ENCODE measurements at regions of chrX and their contacts with region 1.

Region 1: DNA sequence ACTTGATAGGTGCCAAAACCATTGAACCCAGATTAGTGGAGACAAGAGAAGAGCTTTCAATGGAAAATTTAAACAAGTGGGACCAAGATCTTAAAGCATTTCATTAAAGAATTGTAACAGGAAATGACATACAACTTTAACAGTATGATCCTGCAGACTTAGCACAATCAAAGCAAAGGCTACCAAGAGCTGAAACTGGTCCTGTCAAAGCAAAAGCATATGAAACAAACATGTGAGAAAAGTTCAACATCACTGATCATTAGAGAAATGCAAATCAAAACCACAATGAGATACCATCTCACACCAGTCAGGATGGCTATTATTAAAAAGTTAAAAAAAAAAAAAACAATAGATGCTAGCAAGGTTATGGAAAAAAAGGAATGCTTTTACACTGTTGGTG is 425.6 kb downstream of the IL1RAPL1 start:
- DNase-seq: no peak
- H3K4me3 ChIP-seq: no peak overlapping the region
- H3K27ac ChIP-seq: no peak overlapping the region
- H3K4me1 ChIP-seq: no peaks in the 10 kb centered on the region
- H3K27me3 ChIP-seq: no peaks in the 10 kb centered on the region
- CTCF ChIP-seq: no peak
- POLR2A ChIP-seq: no peak

Region 2: DNA sequence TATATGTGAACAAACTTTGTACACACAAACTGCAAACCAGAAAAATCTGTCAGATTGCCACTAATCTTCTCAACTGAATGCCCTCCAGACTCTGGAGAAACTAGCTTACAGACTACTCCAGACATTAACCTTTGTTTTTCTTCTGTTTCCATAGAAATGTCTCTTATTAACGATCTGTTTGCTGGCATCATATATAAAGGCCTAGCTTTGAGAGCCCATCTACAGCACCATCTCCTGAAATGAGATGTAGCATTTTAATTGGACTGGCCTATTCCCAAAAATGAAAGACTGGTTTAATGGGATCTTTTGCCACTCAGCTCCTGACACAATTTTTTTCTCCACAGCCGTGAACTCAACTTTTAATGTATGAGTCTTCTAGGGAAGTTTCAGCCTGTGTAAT is 691.6 kb before region 1 on chrX:
- intact Hi-C with region 1: no loop called
- DNase-seq: no peak
- H3K4me3 ChIP-seq: no peak overlapping the region
- H3K27ac ChIP-seq: no peak overlapping the region
- H3K4me1 ChIP-seq: no peaks in the 10 kb centered on the region
- H3K27me3 ChIP-seq: no peaks in the 10 kb centered on the region
- CTCF ChIP-seq: no peak
- POLR2A ChIP-seq: no peak

Region 3: GRCh38 chrX:29071525-29072315 is 58.9 kb after region 1 on chrX:
- intact Hi-C with region 1: loop called (anchors 10 kb)
- DNase-seq: no peak
- H3K4me3 ChIP-seq: no peak overlapping the region
- H3K27ac ChIP-seq: no peak overlapping the region
- H3K4me1 ChIP-seq: no peaks in the 10 kb centered on the region
- H3K27me3 ChIP-seq: no peaks in the 10 kb centered on the region
- CTCF ChIP-seq: no peak
- POLR2A ChIP-seq: no peak